ENCODE measurements at regions of chr7 and their contacts with region 1.

Region 1: GRCh38 chr7:36291387-36292316 is 98.0 kb upstream of the ANLN start:
- DNase-seq: peak; percentile 81
- ATAC-seq: peak; percentile 66
- H3K4me3 ChIP-seq: peak overlapping the region in 1 of 3 experiments; percentile 49; a peak in 2 of 6 replicates
- H3K27ac ChIP-seq: peak overlapping the region; percentile 91
- H3K4me1 ChIP-seq: peaks cover 63% of the 10 kb centered on the region
- H3K27me3 ChIP-seq: no peaks in the 10 kb centered on the region
- CTCF ChIP-seq: peak; percentile 99
- EP300 ChIP-seq: peak in 1 of 2 experiments; percentile 67; a peak in 2 of 4 replicates
- POLR2A ChIP-seq: no peak
- RAD21 ChIP-seq: peak; percentile 97

Region 2: DNA sequence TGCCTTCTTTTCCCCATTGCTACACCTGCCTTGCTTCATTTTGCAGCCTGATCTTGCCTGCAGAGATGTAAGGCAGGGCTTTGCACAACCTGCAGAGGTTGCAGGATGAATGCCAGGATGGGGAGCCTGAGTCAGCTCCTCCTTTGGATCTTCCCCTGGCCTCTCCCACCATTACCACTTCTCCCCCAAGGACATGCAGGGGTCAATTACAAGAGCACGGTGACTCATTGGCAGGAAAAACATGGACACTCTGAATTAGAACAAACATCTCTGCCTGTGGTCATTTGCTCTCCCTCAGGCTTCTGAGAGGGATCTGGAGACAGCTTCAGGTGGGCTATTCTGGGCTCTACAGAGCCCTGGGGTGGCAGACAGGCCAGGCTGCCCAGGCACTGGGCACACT is 685.9 kb before region 1 on chr7:
- CTCF ChIA-PET with region 1: no interaction called
- POLR2A ChIA-PET with region 1: no interaction called
- in situ Hi-C with region 1: no loop called
- intact Hi-C with region 1: no loop called
- DNase-seq: no peak
- ATAC-seq: no peak
- H3K4me3 ChIP-seq: no peak overlapping the region
- H3K27ac ChIP-seq: no peak overlapping the region
- H3K4me1 ChIP-seq: no peaks in the 10 kb centered on the region
- H3K27me3 ChIP-seq: peaks cover 0 to 10% of the 10 kb centered on the region in 2 experiments; a peak in 1 of 5 replicates
- CTCF ChIP-seq: no peak
- EP300 ChIP-seq: no peak
- POLR2A ChIP-seq: no peak
- RAD21 ChIP-seq: no peak

Region 3: GRCh38 chr7:35801392-35802101 is 490.1 kb before region 1 on chr7:
- CTCF ChIA-PET with region 1: no interaction called
- POLR2A ChIA-PET with region 1: interaction called, 4 read pairs
- in situ Hi-C with region 1: no loop called
- intact Hi-C with region 1: loop called (anchors 2 kb)
- DNase-seq: peak; percentile 32
- ATAC-seq: peak; percentile 78
- H3K4me3 ChIP-seq: peak overlapping the region; percentile 85 to 97 (median 87)
- H3K27ac ChIP-seq: peak overlapping the region; percentile 96
- H3K4me1 ChIP-seq: peaks cover 45% of the 10 kb centered on the region
- H3K27me3 ChIP-seq: peaks cover 0 to 3% of the 10 kb centered on the region in 2 experiments; a peak in 1 of 5 replicates
- CTCF ChIP-seq: peak; percentile 69
- EP300 ChIP-seq: no peak
- POLR2A ChIP-seq: 0 out of 4 replicates have a peak, but pooled peaks of 1 of the 2 experiments have one; percentile 12
- RAD21 ChIP-seq: no peak

Region 4: GRCh38 chr7:36084475-36085097 is 207.1 kb before region 1 on chr7:
- CTCF ChIA-PET with region 1: interaction called, 28 read pairs
- POLR2A ChIA-PET with region 1: no interaction called
- in situ Hi-C with region 1: no loop called
- intact Hi-C with region 1: loop called (anchors 1 kb)
- DNase-seq: peak; percentile 65
- ATAC-seq: peak; percentile 93
- H3K4me3 ChIP-seq: no peak overlapping the region
- H3K27ac ChIP-seq: no peak overlapping the region
- H3K4me1 ChIP-seq: peaks cover 20% of the 10 kb centered on the region
- H3K27me3 ChIP-seq: peaks cover 0 to 14% of the 10 kb centered on the region in 2 experiments; a peak in 1 of 5 replicates
- CTCF ChIP-seq: peak; percentile 94
- EP300 ChIP-seq: peak in 1 of 2 experiments; percentile 54; a peak in 1 of 4 replicates
- POLR2A ChIP-seq: no peak
- RAD21 ChIP-seq: peak; percentile 74

Region 5: GRCh38 chr7:36152756-36153570 is 138.7 kb before region 1 on chr7 and contains the start of gene EEPD1:
- CTCF ChIA-PET with region 1: no interaction called
- POLR2A ChIA-PET with region 1: interaction called, 3 read pairs
- in situ Hi-C with region 1: loop called (anchors 10 kb)
- intact Hi-C with region 1: loop called (anchors 1 kb)
- DNase-seq: peak; percentile 96
- ATAC-seq: peak; percentile 86
- H3K4me3 ChIP-seq: peak within 1 kb of the TSS; percentile 82 to 91 (median 89)
- H3K27ac ChIP-seq: peak within 1 kb of the TSS; percentile 82
- H3K4me1 ChIP-seq: peaks cover 67% of the 10 kb centered on the region
- H3K27me3 ChIP-seq: 0 out of 5 replicates have a peak, but pooled peaks cover 0 to 2% of the 10 kb centered on the region in 2 experiments
- CTCF ChIP-seq: no peak
- EP300 ChIP-seq: peak in 1 of 2 experiments; percentile 21; a peak in 1 of 4 replicates
- POLR2A ChIP-seq: peak; percentile 78 to 93
- RAD21 ChIP-seq: peak; percentile 65
- total RNA-seq, gene EEPD1: 10.0 and 10.1 TPM in 2 replicates

Region 6: GRCh38 chr7:36272567-36273269 is 18.9 kb before region 1 on chr7:
- CTCF ChIA-PET with region 1: no interaction called
- POLR2A ChIA-PET with region 1: interaction called, 8 read pairs
- in situ Hi-C with region 1: no loop called
- intact Hi-C with region 1: loop called (anchors 2 kb)
- DNase-seq: peak; percentile 85
- ATAC-seq: peak; percentile 92
- H3K4me3 ChIP-seq: no peak overlapping the region; a peak in 1 of 6 replicates
- H3K27ac ChIP-seq: peak overlapping the region; percentile 65
- H3K4me1 ChIP-seq: peaks cover 58% of the 10 kb centered on the region
- H3K27me3 ChIP-seq: no peaks in the 10 kb centered on the region
- CTCF ChIP-seq: no peak
- EP300 ChIP-seq: peak in 1 of 2 experiments; percentile 69; a peak in 2 of 4 replicates
- POLR2A ChIP-seq: no peak
- RAD21 ChIP-seq: peak; percentile 13; the same call in 1 of the 2 replicates